Ascending aorta (tissue), 2 donors: ENCODE measurements at regions of chr1 and their contacts with region 1.

Region 1: DNA sequence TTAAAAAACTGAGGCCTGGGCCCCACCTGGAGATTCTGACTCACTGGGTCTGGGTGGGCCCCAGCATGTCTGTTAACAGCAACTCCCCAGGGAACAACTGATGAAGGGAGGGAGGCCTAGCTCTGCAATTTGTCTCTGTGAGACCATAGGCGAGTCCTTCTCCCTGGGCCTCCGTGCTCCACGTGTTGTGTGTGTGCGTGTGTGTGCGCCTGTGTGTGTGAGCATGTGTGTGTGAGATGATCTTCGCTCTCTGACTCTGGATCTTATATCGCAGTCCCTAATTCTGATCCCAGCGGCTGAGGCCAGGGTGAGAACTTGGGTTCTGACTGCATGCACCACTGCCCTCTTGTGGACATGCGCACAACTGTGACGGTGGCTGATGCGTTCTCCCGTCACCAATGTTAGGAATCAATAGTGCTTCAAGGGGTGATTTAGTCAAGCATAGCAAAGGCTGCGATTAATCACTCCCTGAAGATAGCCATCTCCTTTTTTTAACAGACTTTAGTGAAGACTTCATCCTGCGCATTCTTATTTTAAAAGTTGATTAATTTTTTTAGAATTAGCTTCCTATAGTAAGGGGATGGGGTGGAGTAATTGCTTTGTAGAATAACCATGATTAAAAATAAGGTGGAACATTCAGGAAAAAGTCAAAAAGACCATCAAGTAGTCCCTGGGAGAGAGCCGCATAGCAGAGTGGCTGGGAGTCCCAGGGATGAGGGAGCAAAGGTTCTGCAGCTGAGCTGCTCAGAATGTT is 62.4 kb upstream of the USP24 start:
- DNase-seq: peak in 1 of 2 donors; percentile 89
- H3K4me3 ChIP-seq: no peak overlapping the region
- H3K27ac ChIP-seq: no peak overlapping the region
- H3K4me1 ChIP-seq: peaks cover 0 to 6% of the 10 kb centered on the region in 2 donors
- H3K27me3 ChIP-seq: no peaks in the 10 kb centered on the region
- CTCF ChIP-seq: peak; percentile 68 to 80 (median 74)

Region 2: DNA sequence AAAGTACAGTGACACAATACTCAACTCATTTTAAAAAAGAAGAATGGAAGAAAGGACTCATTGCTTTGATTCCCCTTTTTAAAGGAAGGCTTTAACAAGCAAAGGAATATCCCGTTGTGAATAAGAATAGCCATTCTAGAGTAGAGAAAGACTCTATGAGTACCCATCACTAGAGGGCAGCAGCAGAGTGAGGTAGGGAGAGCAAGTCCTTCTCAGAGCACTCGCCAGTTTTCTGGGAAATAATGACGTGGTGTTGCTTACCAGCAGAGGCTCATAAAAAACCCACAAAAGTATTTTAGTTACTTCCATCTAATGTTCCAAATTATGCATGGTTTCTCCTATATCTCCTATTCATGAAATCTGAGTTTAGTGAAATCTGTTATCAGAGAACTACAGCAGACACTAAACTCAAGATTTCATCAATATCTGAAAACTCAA is 137.0 kb before region 1 on chr1:
- intact Hi-C with region 1: loop called (anchors 1 kb)
- DNase-seq: peak in 1 of 2 donors; percentile 85
- H3K4me3 ChIP-seq: no peak overlapping the region
- H3K27ac ChIP-seq: peak overlapping the region in 1 of 2 donors; percentile 9
- H3K4me1 ChIP-seq: no peaks in the 10 kb centered on the region
- H3K27me3 ChIP-seq: no peaks in the 10 kb centered on the region
- CTCF ChIP-seq: peak; percentile 65 to 86 (median 76)

Region 3: GRCh38 chr1:55235722-55236121 is 41.8 kb before region 1 on chr1:
- intact Hi-C with region 1: no loop called
- DNase-seq: no peak
- H3K4me3 ChIP-seq: no peak overlapping the region
- H3K27ac ChIP-seq: no peak overlapping the region
- H3K4me1 ChIP-seq: no peaks in the 10 kb centered on the region
- H3K27me3 ChIP-seq: no peaks in the 10 kb centered on the region
- CTCF ChIP-seq: no peak

Region 4: DNA sequence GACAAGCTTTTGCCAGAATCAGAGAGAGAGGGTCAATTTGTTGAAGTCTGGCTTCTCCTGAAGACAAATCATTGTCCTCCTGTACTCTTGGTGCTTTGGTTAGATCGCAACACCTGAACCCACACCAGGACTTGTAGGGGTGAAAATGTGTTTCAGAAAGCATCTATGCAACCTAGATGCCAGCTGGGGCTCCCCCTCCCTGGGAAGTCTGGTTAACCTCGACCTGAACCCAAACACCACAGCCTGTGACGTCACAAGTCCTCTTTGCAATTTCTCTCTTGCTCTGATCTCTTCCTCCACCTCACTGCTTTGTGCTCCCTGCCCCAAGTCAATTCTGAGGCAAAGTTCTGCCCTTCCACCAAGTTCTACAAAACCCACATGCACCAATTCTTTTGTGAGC is 19.6 kb before region 1 on chr1:
- intact Hi-C with region 1: no loop called
- DNase-seq: no peak
- H3K4me3 ChIP-seq: no peak overlapping the region
- H3K27ac ChIP-seq: no peak overlapping the region
- H3K4me1 ChIP-seq: no peaks in the 10 kb centered on the region
- H3K27me3 ChIP-seq: no peaks in the 10 kb centered on the region
- CTCF ChIP-seq: no peak